CD8-positive, alpha-beta T cell (primary cell): ENCODE measurements at regions of chr1 and their contacts with region 1.

Region 1: GRCh38 chr1:37449936-37450335 is 24.4 kb upstream of the ZC3H12A start:
- DNase-seq: peak in 4 of 9 experiments; percentile 18 to 59 (median 40)
- ATAC-seq: peak; percentile 74
- H3K4me3 ChIP-seq: no peak overlapping the region
- H3K4me3 Mint-ChIP-seq: no peak overlapping the region
- H3K27ac ChIP-seq: no peak overlapping the region
- H3K27ac Mint-ChIP-seq: no peak overlapping the region
- H3K4me1 ChIP-seq: peaks cover 10% of the 10 kb centered on the region
- H3K4me1 Mint-ChIP-seq: peaks cover 18% of the 10 kb centered on the region
- H3K27me3 ChIP-seq: no peaks in the 10 kb centered on the region
- H3K27me3 Mint-ChIP-seq: peaks cover 10% of the 10 kb centered on the region
- CTCF ChIP-seq: no peak

Region 2: GRCh38 chr1:37387859-37388258 is 62.1 kb before region 1 on chr1:
- CTCF ChIA-PET with region 1: no interaction called
- POLR2A ChIA-PET with region 1: no interaction called
- intact Hi-C with region 1: no loop called
- DNase-seq: no peak
- ATAC-seq: no peak
- H3K4me3 ChIP-seq: no peak overlapping the region
- H3K4me3 Mint-ChIP-seq: no peak overlapping the region
- H3K27ac ChIP-seq: no peak overlapping the region
- H3K27ac Mint-ChIP-seq: no peak overlapping the region
- H3K4me1 ChIP-seq: no peaks in the 10 kb centered on the region
- H3K4me1 Mint-ChIP-seq: no peaks in the 10 kb centered on the region
- H3K27me3 ChIP-seq: no peaks in the 10 kb centered on the region
- H3K27me3 Mint-ChIP-seq: peaks cover 14% of the 10 kb centered on the region
- CTCF ChIP-seq: no peak

Region 3: GRCh38 chr1:37474046-37474759 is 24.3 kb after region 1 on chr1 and contains the start of gene ZC3H12A:
- CTCF ChIA-PET with region 1: interaction called, 41 read pairs
- POLR2A ChIA-PET with region 1: interaction called, 9 read pairs
- intact Hi-C with region 1: loop called (anchors 2 kb)
- DNase-seq: peak; percentile 86 to 97 (median 92)
- ATAC-seq: peak; percentile 57
- H3K4me3 ChIP-seq: peak within 1 kb of the TSS; percentile 93 to 95
- H3K4me3 Mint-ChIP-seq: peak within 1 kb of the TSS; percentile 95
- H3K27ac ChIP-seq: peak within 1 kb of the TSS; percentile 95 to 99
- H3K27ac Mint-ChIP-seq: peak within 1 kb of the TSS; percentile 99
- H3K4me1 ChIP-seq: peaks cover 43% of the 10 kb centered on the region
- H3K4me1 Mint-ChIP-seq: peaks cover 59% of the 10 kb centered on the region
- H3K27me3 ChIP-seq: no peaks in the 10 kb centered on the region
- H3K27me3 Mint-ChIP-seq: no peaks in the 10 kb centered on the region
- CTCF ChIP-seq: no peak
- total RNA-seq, gene ZC3H12A: 202 to 205 TPM

Region 4: GRCh38 chr1:37486680-37487618 is 37.0 kb after region 1 on chr1:
- CTCF ChIA-PET with region 1: interaction called, 559 read pairs
- POLR2A ChIA-PET with region 1: interaction called, 21 read pairs
- intact Hi-C with region 1: loop called (anchors 1 kb)
- DNase-seq: peak; percentile 54 to 88 (median 82)
- ATAC-seq: peak; percentile 74
- H3K4me3 ChIP-seq: no peak overlapping the region
- H3K4me3 Mint-ChIP-seq: no peak overlapping the region
- H3K27ac ChIP-seq: peak overlapping the region in 1 of 2 experiments; percentile 17
- H3K27ac Mint-ChIP-seq: peak overlapping the region; percentile 71
- H3K4me1 ChIP-seq: peaks cover 11% of the 10 kb centered on the region
- H3K4me1 Mint-ChIP-seq: peaks cover 20% of the 10 kb centered on the region
- H3K27me3 ChIP-seq: no peaks in the 10 kb centered on the region
- H3K27me3 Mint-ChIP-seq: no peaks in the 10 kb centered on the region
- CTCF ChIP-seq: peak; percentile 94

Region 5: DNA sequence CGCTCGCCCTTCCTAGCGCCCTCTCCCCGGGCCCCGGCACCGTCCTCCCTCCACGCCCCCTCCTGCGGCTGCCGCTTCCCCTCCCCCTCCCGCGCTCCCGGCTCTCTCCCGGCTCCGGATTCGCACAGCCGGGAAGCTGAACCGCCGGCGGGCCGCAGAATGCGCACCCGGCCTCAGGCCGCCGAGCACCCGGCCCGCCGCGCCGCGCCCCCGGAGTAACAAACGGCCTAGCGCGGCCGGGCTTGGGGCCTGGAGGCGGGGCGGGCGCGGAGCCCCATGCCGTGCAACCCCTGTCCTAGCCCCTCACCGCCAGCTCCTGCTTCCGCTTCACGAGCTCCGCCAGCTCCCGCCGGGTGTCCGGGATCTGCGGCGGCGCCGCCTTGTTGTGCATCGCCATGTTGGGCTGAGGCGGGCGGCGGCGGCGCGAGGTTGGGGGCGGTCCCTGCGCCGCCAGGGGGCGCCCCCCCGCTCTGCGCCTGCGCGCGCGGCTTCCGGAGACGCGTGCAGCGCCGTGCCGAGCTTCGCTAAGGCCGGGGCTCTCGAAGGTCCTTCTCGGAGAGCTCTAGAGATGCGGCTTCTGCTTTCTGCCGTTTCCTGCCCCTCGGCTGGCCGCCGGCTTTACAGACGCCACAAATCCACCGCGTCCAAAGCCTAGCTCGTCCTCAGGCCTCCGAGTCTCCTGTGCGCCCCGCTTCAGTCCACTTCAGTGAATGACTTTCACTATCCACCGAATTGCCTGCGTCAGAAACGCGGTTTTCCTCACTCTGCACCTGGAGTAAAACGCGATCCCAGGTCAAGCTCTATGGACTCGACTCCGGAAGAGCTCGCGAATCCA is 64.6 kb after region 1 on chr1 and contains the start of gene MEAF6:
- CTCF ChIA-PET with region 1: interaction called, 13 read pairs
- POLR2A ChIA-PET with region 1: no interaction called
- intact Hi-C with region 1: no loop called
- DNase-seq: peak; percentile 68 to 92 (median 83)
- ATAC-seq: peak; percentile 94
- H3K4me3 ChIP-seq: peak within 1 kb of the TSS; percentile 59 to 67
- H3K4me3 Mint-ChIP-seq: peak within 1 kb of the TSS; percentile 97
- H3K27ac ChIP-seq: peak within 1 kb of the TSS; percentile 78 to 79
- H3K27ac Mint-ChIP-seq: peak within 1 kb of the TSS; percentile 97
- H3K4me1 ChIP-seq: peaks cover 30% of the 10 kb centered on the region
- H3K4me1 Mint-ChIP-seq: peaks cover 44% of the 10 kb centered on the region
- H3K27me3 ChIP-seq: no peaks in the 10 kb centered on the region
- H3K27me3 Mint-ChIP-seq: no peaks in the 10 kb centered on the region
- CTCF ChIP-seq: peak; percentile 72
- total RNA-seq, gene MEAF6: 43.4 to 46.0 TPM

Region 6: GRCh38 chr1:37612200-37612599 is 162.3 kb after region 1 on chr1:
- CTCF ChIA-PET with region 1: no interaction called
- POLR2A ChIA-PET with region 1: no interaction called
- intact Hi-C with region 1: no loop called
- DNase-seq: no peak
- ATAC-seq: no peak
- H3K4me3 ChIP-seq: no peak overlapping the region
- H3K4me3 Mint-ChIP-seq: no peak overlapping the region
- H3K27ac ChIP-seq: no peak overlapping the region
- H3K27ac Mint-ChIP-seq: no peak overlapping the region
- H3K4me1 ChIP-seq: no peaks in the 10 kb centered on the region
- H3K4me1 Mint-ChIP-seq: no peaks in the 10 kb centered on the region
- H3K27me3 ChIP-seq: no peaks in the 10 kb centered on the region
- H3K27me3 Mint-ChIP-seq: peaks cover 33% of the 10 kb centered on the region
- CTCF ChIP-seq: no peak

Region 7: GRCh38 chr1:37682334-37682987 is 232.5 kb after region 1 on chr1:
- CTCF ChIA-PET with region 1: interaction called, 13 read pairs
- POLR2A ChIA-PET with region 1: no interaction called
- intact Hi-C with region 1: loop called in 1 of 2 experiments (anchors 1 kb)
- DNase-seq: peak; percentile 58 to 85 (median 76)
- ATAC-seq: peak; percentile 95
- H3K4me3 ChIP-seq: no peak overlapping the region
- H3K4me3 Mint-ChIP-seq: no peak overlapping the region
- H3K27ac ChIP-seq: no peak overlapping the region
- H3K27ac Mint-ChIP-seq: peak overlapping the region; percentile 74
- H3K4me1 ChIP-seq: peaks cover 3% of the 10 kb centered on the region
- H3K4me1 Mint-ChIP-seq: peaks cover 3% of the 10 kb centered on the region
- H3K27me3 ChIP-seq: no peaks in the 10 kb centered on the region
- H3K27me3 Mint-ChIP-seq: no peaks in the 10 kb centered on the region
- CTCF ChIP-seq: peak; percentile 89

Region 8: GRCh38 chr1:37859507-37860345 is 409.8 kb after region 1 on chr1 and contains the start of gene MTF1:
- CTCF ChIA-PET with region 1: no interaction called
- POLR2A ChIA-PET with region 1: no interaction called
- intact Hi-C with region 1: no loop called
- DNase-seq: peak; percentile 91 to 99 (median 96)
- ATAC-seq: peak; percentile 99
- H3K4me3 ChIP-seq: peak within 1 kb of the TSS; percentile 88 to 99
- H3K4me3 Mint-ChIP-seq: peak within 1 kb of the TSS; percentile 98
- H3K27ac ChIP-seq: peak within 1 kb of the TSS; percentile 94 to 96
- H3K27ac Mint-ChIP-seq: peak within 1 kb of the TSS; percentile 94
- H3K4me1 ChIP-seq: peaks cover 19% of the 10 kb centered on the region
- H3K4me1 Mint-ChIP-seq: peaks cover 34% of the 10 kb centered on the region
- H3K27me3 ChIP-seq: no peaks in the 10 kb centered on the region
- H3K27me3 Mint-ChIP-seq: no peaks in the 10 kb centered on the region
- CTCF ChIP-seq: peak; percentile 79
- total RNA-seq, gene MTF1: 30.3 to 30.8 TPM

Region 9: GRCh38 chr1:39183503-39184353 is 1733.8 kb after region 1 on chr1:
- CTCF ChIA-PET with region 1: no interaction called
- POLR2A ChIA-PET with region 1: no interaction called
- intact Hi-C with region 1: no loop called
- DNase-seq: peak; percentile 60 to 93 (median 83)
- ATAC-seq: peak; percentile 87
- H3K4me3 ChIP-seq: no peak overlapping the region
- H3K4me3 Mint-ChIP-seq: no peak overlapping the region
- H3K27ac ChIP-seq: peak overlapping the region; percentile 46 to 69
- H3K27ac Mint-ChIP-seq: peak overlapping the region; percentile 97
- H3K4me1 ChIP-seq: peaks cover 20% of the 10 kb centered on the region
- H3K4me1 Mint-ChIP-seq: peaks cover 34% of the 10 kb centered on the region
- H3K27me3 ChIP-seq: no peaks in the 10 kb centered on the region
- H3K27me3 Mint-ChIP-seq: no peaks in the 10 kb centered on the region
- CTCF ChIP-seq: peak; percentile 71